ENCODE measurements at regions of chr16 and their contacts with region 1.

Region 1: GRCh38 chr16:66315210-66315825 is 51.2 kb upstream of the CDH5 start:
- DNase-seq: peak; percentile 86
- H3K4me3 Mint-ChIP-seq: no peak overlapping the region
- H3K27ac Mint-ChIP-seq: no peak overlapping the region
- H3K4me1 Mint-ChIP-seq: peaks cover 4% of the 10 kb centered on the region
- H3K27me3 Mint-ChIP-seq: peaks cover 4% of the 10 kb centered on the region

Region 2: GRCh38 chr16:66255647-66256046 is 59.7 kb before region 1 on chr16:
- intact Hi-C with region 1: no loop called
- DNase-seq: no peak
- H3K4me3 Mint-ChIP-seq: no peak overlapping the region
- H3K27ac Mint-ChIP-seq: no peak overlapping the region
- H3K4me1 Mint-ChIP-seq: no peaks in the 10 kb centered on the region
- H3K27me3 Mint-ChIP-seq: no peaks in the 10 kb centered on the region

Region 3: DNA sequence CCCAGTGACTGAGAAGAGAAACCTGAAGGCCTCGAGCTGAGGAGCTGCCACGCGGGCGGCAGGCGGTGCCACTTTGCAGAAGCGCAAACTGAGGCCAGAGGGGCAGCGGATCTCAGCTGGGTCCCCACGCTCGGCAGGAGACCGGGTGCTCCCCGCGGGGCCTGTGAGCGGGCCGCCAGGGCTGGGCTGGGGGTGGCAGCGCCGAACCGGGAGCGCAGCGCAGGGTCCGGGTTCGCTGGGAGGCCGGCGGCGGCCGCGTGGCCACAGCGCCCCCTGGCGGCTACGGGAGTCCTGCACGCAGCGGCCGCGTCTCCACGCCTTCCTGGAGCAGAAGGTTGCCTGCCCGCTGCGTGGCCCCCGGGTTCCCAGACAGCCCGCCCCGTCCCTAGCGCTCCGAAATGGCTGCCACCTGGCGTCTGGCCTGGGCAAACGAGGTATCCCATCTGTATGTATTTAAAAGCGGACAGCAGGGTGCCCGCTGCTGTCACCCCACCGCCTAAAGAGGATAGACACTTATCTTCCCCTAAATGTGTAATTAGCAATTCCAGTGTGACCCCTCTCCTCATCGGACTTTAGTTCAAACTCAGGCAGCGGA is 44.9 kb before region 1 on chr16:
- intact Hi-C with region 1: loop called (anchors 1 kb)
- DNase-seq: peak; percentile 90
- H3K4me3 Mint-ChIP-seq: no peak overlapping the region
- H3K27ac Mint-ChIP-seq: no peak overlapping the region
- H3K4me1 Mint-ChIP-seq: peaks cover 7% of the 10 kb centered on the region
- H3K27me3 Mint-ChIP-seq: peaks cover 36% of the 10 kb centered on the region